ENCODE measurements at regions of chr12 and their contacts with region 1.

Region 1: GRCh38 chr12:43805860-43806736 is at the start of gene TWF1:
- DNase-seq: no peak
- H3K4me3 ChIP-seq: peak within 1 kb of the TSS; percentile 87
- H3K27ac ChIP-seq: peak within 1 kb of the TSS; percentile 94
- H3K27me3 ChIP-seq: no peaks in the 10 kb centered on the region
- CTCF ChIP-seq: peak; percentile 27; the same call in 1 of the 2 replicates
- polyA plus RNA-seq, gene TWF1: 101 and 147 TPM in 2 replicates

Region 2: GRCh38 chr12:43835656-43836474 is 29.8 kb after region 1 on chr12 and contains the start of gene TMEM117:
- CTCF ChIA-PET with region 1: no interaction called
- POLR2A ChIA-PET with region 1: interaction called, 22 read pairs
- DNase-seq: no peak
- H3K4me3 ChIP-seq: peak within 1 kb of the TSS; percentile 72
- H3K27ac ChIP-seq: peak within 1 kb of the TSS; percentile 82
- H3K27me3 ChIP-seq: no peaks in the 10 kb centered on the region
- CTCF ChIP-seq: no peak
- polyA plus RNA-seq, gene TMEM117: 11.3 and 15.4 TPM in 2 replicates

Region 3: GRCh38 chr12:43869184-43869583 is 63.1 kb after region 1 on chr12:
- CTCF ChIA-PET with region 1: no interaction called
- POLR2A ChIA-PET with region 1: no interaction called
- DNase-seq: no peak
- H3K4me3 ChIP-seq: no peak overlapping the region
- H3K27ac ChIP-seq: no peak overlapping the region
- H3K27me3 ChIP-seq: no peaks in the 10 kb centered on the region
- CTCF ChIP-seq: no peak

Region 4: DNA sequence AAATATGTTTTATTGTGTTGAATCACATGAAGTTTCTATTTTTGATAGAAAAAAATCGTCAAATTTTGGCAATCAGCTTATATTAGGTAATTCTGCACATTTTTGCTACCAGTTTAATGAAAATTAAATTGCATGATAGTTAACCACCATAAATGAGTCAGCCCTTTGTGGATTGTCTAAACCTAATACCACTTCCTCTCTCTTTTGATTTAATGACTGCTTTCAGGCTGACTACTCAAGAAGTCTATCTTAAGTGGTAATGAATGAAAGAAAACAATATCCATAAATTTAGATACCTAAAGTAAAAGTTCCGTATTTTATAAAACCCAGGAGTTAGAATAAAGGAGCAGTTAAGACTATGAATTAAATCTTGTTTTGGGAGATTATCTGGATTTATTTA is 480.2 kb after region 1 on chr12:
- CTCF ChIA-PET with region 1: no interaction called
- POLR2A ChIA-PET with region 1: no interaction called
- DNase-seq: no peak
- H3K4me3 ChIP-seq: no peak overlapping the region
- H3K27ac ChIP-seq: no peak overlapping the region
- H3K27me3 ChIP-seq: no peaks in the 10 kb centered on the region
- CTCF ChIP-seq: no peak

Measured in AG04450 (cell line).